ENCODE measurements at regions of chr6 and their contacts with region 1.

Region 1: GRCh38 chr6:32838114-32838958 is at the start of gene TAP2:
- DNase-seq: peak; percentile 98
- ATAC-seq: peak; percentile 82
- H3K4me3 Mint-ChIP-seq: peak within 1 kb of the TSS; percentile 92
- H3K27ac Mint-ChIP-seq: peak within 1 kb of the TSS; percentile 100
- H3K4me1 Mint-ChIP-seq: peaks cover 91% of the 10 kb centered on the region
- H3K27me3 Mint-ChIP-seq: no peaks in the 10 kb centered on the region
- CTCF ChIP-seq: peak; percentile 23
- total RNA-seq, gene TAP2: 141 and 172 TPM in 2 replicates

Region 2: GRCh38 chr6:32413427-32414047 is 424.8 kb before region 1 on chr6:
- CTCF ChIA-PET with region 1: interaction called, 12 read pairs
- POLR2A ChIA-PET with region 1: interaction called, 4 read pairs
- intact Hi-C with region 1: no loop called
- DNase-seq: peak; percentile 80
- ATAC-seq: peak; percentile 88
- H3K4me3 Mint-ChIP-seq: peak overlapping the region; percentile 75
- H3K27ac Mint-ChIP-seq: peak overlapping the region; percentile 5
- H3K4me1 Mint-ChIP-seq: peaks cover 14% of the 10 kb centered on the region
- H3K27me3 Mint-ChIP-seq: peaks cover 4% of the 10 kb centered on the region
- CTCF ChIP-seq: no peak

Region 3: DNA sequence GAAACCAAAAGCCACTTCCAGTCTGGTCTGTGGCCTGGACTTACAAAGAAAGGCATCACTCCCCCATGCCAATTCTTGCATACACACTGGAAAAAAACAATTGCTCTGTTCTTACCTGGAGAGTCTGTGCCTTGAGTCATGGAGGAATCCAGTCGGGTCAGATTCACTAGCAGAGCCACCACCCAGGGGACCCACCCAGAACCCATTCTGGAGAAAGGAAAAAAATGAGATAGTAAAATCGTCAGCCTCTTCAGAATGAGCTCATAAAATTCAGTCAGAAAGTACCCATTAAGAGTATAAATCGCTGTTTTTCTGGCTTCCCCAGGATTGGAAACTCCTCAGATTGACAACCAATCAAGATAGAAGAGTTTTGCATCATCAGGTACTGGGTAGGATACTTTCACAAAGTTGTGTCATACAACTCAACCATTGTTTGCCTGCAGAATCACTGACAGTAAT is 21.6 kb before region 1 on chr6 and contains the start of gene HLA-DOB:
- CTCF ChIA-PET with region 1: interaction called, 18 read pairs
- POLR2A ChIA-PET with region 1: interaction called, 51 read pairs
- intact Hi-C with region 1: loop called (anchors 1 kb)
- DNase-seq: no peak
- ATAC-seq: peak; percentile 73
- H3K4me3 Mint-ChIP-seq: peak within 1 kb of the TSS; percentile 99
- H3K27ac Mint-ChIP-seq: peak within 1 kb of the TSS; percentile 99
- H3K4me1 Mint-ChIP-seq: peaks cover 96% of the 10 kb centered on the region
- H3K27me3 Mint-ChIP-seq: no peaks in the 10 kb centered on the region
- CTCF ChIP-seq: no peak
- total RNA-seq, gene HLA-DOB: 95.6 and 101 TPM in 2 replicates

Region 4: GRCh38 chr6:32862725-32863124 is 24.4 kb after region 1 on chr6:
- CTCF ChIA-PET with region 1: interaction called, 198 read pairs
- POLR2A ChIA-PET with region 1: interaction called, 904 read pairs
- intact Hi-C with region 1: no loop called
- DNase-seq: no peak
- ATAC-seq: no peak
- H3K4me3 Mint-ChIP-seq: no peak overlapping the region
- H3K27ac Mint-ChIP-seq: no peak overlapping the region
- H3K4me1 Mint-ChIP-seq: peaks cover 62% of the 10 kb centered on the region
- H3K27me3 Mint-ChIP-seq: no peaks in the 10 kb centered on the region
- CTCF ChIP-seq: no peak

Region 5: GRCh38 chr6:32894080-32895005 is 56.0 kb after region 1 on chr6:
- CTCF ChIA-PET with region 1: interaction called, 3 read pairs
- POLR2A ChIA-PET with region 1: interaction called, 12 read pairs
- intact Hi-C with region 1: no loop called
- DNase-seq: peak; percentile 96
- ATAC-seq: peak; percentile 97
- H3K4me3 Mint-ChIP-seq: peak overlapping the region; percentile 99
- H3K27ac Mint-ChIP-seq: peak overlapping the region; percentile 97
- H3K4me1 Mint-ChIP-seq: peaks cover 70% of the 10 kb centered on the region
- H3K27me3 Mint-ChIP-seq: no peaks in the 10 kb centered on the region
- CTCF ChIP-seq: no peak

Region 6: GRCh38 chr6:32984605-32985389 is 146.5 kb after region 1 on chr6:
- CTCF ChIA-PET with region 1: interaction called, 23 read pairs
- POLR2A ChIA-PET with region 1: interaction called, 10 read pairs
- intact Hi-C with region 1: no loop called
- DNase-seq: peak; percentile 74
- ATAC-seq: peak; percentile 90
- H3K4me3 Mint-ChIP-seq: no peak overlapping the region
- H3K27ac Mint-ChIP-seq: peak overlapping the region; percentile 73
- H3K4me1 Mint-ChIP-seq: peaks cover 32% of the 10 kb centered on the region
- H3K27me3 Mint-ChIP-seq: no peaks in the 10 kb centered on the region
- CTCF ChIP-seq: no peak

Region 7: DNA sequence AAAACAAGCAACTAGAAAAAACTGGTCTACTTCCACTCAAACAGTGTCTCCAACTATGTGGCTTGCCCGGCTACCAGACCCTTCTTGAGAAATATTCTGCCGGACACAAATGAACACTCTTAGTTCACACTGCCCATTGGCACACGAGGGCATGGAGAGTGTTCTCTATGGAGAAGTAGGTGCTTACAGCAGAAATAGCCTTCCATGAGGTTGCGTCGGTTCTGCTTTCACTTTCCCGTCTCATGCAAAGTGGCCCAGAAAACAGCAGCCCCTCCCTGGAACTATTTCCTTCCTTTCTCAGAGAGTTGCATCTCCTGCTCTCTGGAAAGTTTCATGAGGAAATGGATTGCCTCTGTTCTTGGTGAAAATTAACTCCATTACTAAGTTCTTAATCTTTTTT is 180.6 kb after region 1 on chr6:
- CTCF ChIA-PET with region 1: no interaction called
- POLR2A ChIA-PET with region 1: no interaction called
- intact Hi-C with region 1: no loop called
- DNase-seq: no peak
- ATAC-seq: peak; percentile 90
- H3K4me3 Mint-ChIP-seq: peak overlapping the region; percentile 67
- H3K27ac Mint-ChIP-seq: peak overlapping the region; percentile 98
- H3K4me1 Mint-ChIP-seq: peaks cover 76% of the 10 kb centered on the region
- H3K27me3 Mint-ChIP-seq: no peaks in the 10 kb centered on the region
- CTCF ChIP-seq: no peak